ENCODE measurements at regions of chr20 and their contacts with region 1.

Region 1: GRCh38 chr20:38730989-38731737 is 6.9 kb downstream of the SLC32A1 start:
- DNase-seq: peak; percentile 87
- H3K27ac ChIP-seq: no peak overlapping the region
- CTCF ChIP-seq: peak; percentile 100

Region 2: DNA sequence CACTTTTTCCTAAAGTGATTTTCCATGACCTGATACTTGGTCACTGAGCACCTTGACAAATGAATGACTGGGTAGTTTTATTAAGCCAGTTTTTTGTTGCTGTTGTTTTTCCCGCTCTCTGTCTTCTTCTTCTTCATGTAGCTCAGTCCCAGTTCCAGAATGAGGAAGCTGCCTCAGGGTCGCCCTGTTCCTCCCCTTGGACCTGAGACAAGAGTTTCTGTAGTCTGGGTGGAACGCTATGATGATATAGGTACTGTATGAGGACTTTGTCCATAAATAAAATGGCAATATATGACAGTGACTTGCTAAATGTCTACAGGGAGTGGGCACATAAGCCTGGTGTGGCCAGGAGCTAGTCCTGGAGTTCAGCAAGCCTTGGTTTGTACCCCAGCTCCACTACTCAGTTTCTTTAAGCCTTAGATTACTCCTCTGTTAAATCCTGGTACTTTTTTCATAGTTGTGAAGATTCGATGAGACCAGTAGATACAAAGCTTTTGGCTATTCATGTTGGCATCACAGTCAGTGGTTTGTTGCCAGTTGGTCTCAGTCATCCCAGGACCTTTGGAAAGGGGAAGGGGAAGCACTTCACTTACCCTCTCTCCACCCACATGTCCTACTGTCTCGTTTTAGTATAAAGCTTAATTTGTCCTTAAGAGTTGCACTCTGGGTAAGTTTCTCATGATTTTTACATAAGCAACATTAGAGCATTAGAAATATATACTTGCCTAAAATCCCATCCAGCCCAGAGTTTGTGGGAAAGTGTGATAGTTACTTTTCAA is 161.2 kb before region 1 on chr20:
- CTCF ChIA-PET with region 1: no interaction called
- POLR2A ChIA-PET with region 1: no interaction called
- DNase-seq: no peak
- H3K27ac ChIP-seq: no peak overlapping the region
- CTCF ChIP-seq: no peak

Region 3: DNA sequence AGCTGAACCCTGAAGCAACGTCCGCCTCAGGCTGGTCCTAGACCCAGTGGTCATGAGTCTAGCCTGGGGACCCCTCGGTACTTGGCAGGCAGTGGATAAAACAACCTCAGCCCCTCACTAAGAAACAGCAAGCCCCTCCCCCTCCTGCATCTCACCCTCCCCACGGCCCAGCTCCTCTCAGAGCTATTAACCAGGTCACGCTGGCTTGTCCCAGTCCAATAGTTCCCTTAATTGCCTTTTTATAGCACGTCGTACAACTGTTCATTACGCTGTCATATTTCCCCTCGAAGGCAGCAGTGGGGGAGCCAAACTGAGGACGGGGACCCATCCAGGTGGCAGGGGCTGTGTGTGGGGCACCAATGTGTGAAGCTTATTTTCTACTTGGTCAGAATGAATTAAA is 15.5 kb before region 1 on chr20:
- CTCF ChIA-PET with region 1: interaction called, 19 read pairs
- POLR2A ChIA-PET with region 1: no interaction called
- DNase-seq: no peak
- H3K27ac ChIP-seq: no peak overlapping the region
- CTCF ChIP-seq: no peak

Measured in RWPE1 (cell line).